K562 (cell line): ENCODE measurements at regions of chr5 and their contacts with region 1.

Region 1: GRCh38 chr5:151523335-151523734 is 67.8 kb downstream of the FAT2 start:
- DNase-seq: peak; percentile 55 to 66 (median 58)
- ATAC-seq: peak; percentile 91
- H3K4me3 ChIP-seq: no peak overlapping the region
- H3K27ac ChIP-seq: no peak overlapping the region
- H3K4me1 ChIP-seq: no peaks in the 10 kb centered on the region
- H3K27me3 ChIP-seq: peaks cover 17 to 27% of the 10 kb centered on the region in 2 experiments
- CTCF ChIP-seq: peak; percentile 71 to 83 (median 79)
- EP300 ChIP-seq: no peak
- POLR2A ChIP-seq: no peak
- RAD21 ChIP-seq: peak; percentile 66 to 85

Region 2: GRCh38 chr5:151288180-151288579 is 235.2 kb before region 1 on chr5:
- CTCF ChIA-PET with region 1: no interaction called
- POLR2A ChIA-PET with region 1: interaction called, 3 read pairs
- in situ Hi-C with region 1: no loop called
- intact Hi-C with region 1: loop called (anchors 5 kb)
- DNase-seq: peak in 2 of 4 experiments; percentile 16 to 19
- ATAC-seq: peak; percentile 77
- H3K4me3 ChIP-seq: no peak overlapping the region
- H3K27ac ChIP-seq: no peak overlapping the region
- H3K4me1 ChIP-seq: no peaks in the 10 kb centered on the region
- H3K27me3 ChIP-seq: peaks cover 0 to 10% of the 10 kb centered on the region in 2 experiments; a peak in 4 of 5 replicates
- CTCF ChIP-seq: peak in 2 of 3 experiments; percentile 21 to 24; a peak in 1 of 6 replicates
- EP300 ChIP-seq: no peak
- POLR2A ChIP-seq: no peak
- RAD21 ChIP-seq: peak in 1 of 2 experiments; percentile 28; a peak in 2 of 4 replicates

Region 3: DNA sequence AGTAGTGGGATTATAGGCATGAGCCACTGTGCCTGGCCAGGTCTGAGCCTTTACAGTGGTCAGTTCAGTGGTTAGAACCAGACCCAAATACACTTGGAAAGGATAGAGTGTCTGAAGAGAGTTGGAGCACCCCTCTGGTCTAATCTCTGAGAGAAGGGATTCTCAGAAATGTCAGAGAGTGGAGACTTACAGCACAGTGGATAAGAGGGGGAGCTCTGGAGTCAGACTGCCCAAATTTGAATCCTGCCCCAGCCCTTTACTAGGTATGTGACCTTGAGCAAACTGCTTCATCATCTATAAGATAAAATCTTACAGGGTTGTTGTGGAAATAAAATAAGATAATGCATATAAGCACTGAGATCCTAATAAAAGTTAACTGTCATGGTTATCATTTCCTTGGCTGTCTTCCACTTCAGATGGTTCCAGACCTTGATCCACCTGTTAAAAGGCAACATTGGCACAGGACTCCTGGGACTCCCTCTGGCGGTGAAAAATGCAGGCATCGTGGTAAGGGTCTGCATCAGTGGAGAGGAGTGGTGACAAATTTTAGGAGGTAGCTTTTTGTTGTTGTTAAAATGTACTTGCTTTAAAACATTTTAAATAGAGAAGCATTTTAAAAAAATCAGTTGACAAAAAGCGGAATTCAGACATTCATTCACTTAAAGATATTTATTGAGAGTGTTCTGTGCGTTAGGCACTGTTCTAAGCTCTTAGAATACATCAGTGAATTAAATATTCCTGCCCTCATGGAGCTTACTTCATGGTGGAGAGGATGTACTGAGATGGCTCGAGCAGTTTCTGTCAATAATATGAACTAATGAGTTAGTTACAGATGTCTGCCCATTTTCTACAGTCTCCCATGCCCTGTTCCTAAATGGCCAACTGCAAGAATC is 60.0 kb before region 1 on chr5:
- CTCF ChIA-PET with region 1: no interaction called
- POLR2A ChIA-PET with region 1: no interaction called
- in situ Hi-C with region 1: no loop called
- intact Hi-C with region 1: no loop called
- DNase-seq: no peak
- ATAC-seq: no peak
- H3K4me3 ChIP-seq: no peak overlapping the region
- H3K27ac ChIP-seq: no peak overlapping the region; the same call in 2 of the 3 replicates
- H3K4me1 ChIP-seq: peaks cover 3 to 9% of the 10 kb centered on the region in 2 experiments; a peak in 3 of 5 replicates
- H3K27me3 ChIP-seq: no peaks in the 10 kb centered on the region
- CTCF ChIP-seq: no peak
- EP300 ChIP-seq: no peak
- POLR2A ChIP-seq: no peak
- RAD21 ChIP-seq: no peak

Region 4: DNA sequence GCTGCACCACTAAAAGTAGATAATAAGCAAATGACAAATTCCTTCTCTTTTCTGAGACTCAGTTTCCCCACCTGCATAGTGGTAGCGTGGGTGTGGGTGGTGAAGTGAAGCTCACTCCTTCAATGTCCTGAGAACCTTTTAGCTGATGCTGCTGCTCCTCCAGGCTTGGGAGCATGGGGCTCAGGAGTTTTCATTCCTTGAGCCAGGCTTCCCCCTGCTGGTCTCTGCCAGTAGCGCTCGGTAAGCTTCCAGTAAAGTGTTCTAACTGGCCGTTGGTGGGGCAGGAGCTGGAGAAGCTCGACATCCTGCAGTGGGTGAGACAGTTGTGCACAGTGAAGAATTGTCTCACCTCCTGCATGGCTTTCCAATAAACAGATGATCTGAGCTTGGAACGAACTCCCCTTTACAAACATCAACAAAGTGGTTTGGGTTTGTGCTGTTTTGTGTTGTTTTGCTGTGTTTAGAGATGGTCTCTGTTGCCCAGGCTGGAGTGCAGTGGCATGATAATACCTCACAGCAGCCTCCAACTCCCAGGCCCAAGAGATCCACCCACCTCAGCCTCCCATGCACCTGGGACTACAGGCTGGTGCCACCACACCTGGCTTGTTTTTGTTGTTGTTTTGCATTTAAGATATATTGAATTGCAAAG is 128.8 kb after region 1 on chr5:
- CTCF ChIA-PET with region 1: no interaction called
- POLR2A ChIA-PET with region 1: no interaction called
- in situ Hi-C with region 1: no loop called
- intact Hi-C with region 1: loop called (anchors 1 kb)
- DNase-seq: peak; percentile 61 to 82 (median 75)
- ATAC-seq: peak; percentile 100
- H3K4me3 ChIP-seq: no peak overlapping the region
- H3K27ac ChIP-seq: no peak overlapping the region
- H3K4me1 ChIP-seq: no peaks in the 10 kb centered on the region
- H3K27me3 ChIP-seq: peaks cover 3 to 15% of the 10 kb centered on the region in 2 experiments; a peak in 4 of 5 replicates
- CTCF ChIP-seq: peak; percentile 83 to 93 (median 93)
- EP300 ChIP-seq: no peak
- POLR2A ChIP-seq: no peak
- RAD21 ChIP-seq: peak; percentile 80 to 90

Region 5: DNA sequence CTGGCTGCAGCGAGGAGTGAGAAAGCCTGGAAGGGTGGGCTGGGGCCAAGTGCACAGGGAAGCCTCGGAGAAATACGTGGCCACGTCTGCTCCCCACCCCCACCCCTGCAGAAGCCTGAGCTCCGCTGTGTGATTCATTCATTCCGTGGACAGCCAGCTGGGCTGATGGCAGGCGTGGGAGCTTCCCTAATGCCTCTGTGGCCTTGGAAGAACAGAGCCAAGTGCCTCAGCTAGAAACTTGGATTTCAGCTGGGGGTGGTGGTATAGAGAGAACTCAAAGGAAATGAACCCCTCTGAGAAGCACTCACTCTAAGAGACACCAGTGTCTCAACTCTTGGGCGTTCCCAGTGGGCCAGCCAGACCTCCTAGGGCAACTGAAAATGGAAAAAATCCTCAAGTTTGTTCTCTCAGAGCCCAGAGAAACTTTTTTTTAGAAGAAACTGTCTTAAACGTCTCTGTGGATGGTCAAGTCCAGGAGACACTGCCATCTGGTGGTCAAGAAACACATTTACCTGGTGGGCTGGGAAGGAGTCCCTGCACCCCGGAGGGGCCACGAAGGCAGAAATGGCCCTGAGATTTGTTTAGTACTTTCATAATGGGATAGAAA is 217.1 kb after region 1 on chr5:
- CTCF ChIA-PET with region 1: no interaction called
- POLR2A ChIA-PET with region 1: no interaction called
- in situ Hi-C with region 1: no loop called
- intact Hi-C with region 1: loop called (anchors 5 kb)
- DNase-seq: peak; percentile 77 to 79 (median 78)
- ATAC-seq: peak; percentile 92
- H3K4me3 ChIP-seq: no peak overlapping the region
- H3K27ac ChIP-seq: no peak overlapping the region
- H3K4me1 ChIP-seq: peaks cover 0 to 6% of the 10 kb centered on the region in 2 experiments; a peak in 3 of 5 replicates
- H3K27me3 ChIP-seq: no peaks in the 10 kb centered on the region
- CTCF ChIP-seq: peak; percentile 73 to 90 (median 81)
- EP300 ChIP-seq: no peak
- POLR2A ChIP-seq: no peak
- RAD21 ChIP-seq: peak; percentile 55 to 76